ENCODE measurements at regions of chr6 and their contacts with region 1.

Region 1: GRCh38 chr6:6724539-6725467 is 136.3 kb downstream of the LY86 start:
- DNase-seq: peak; percentile 73
- ATAC-seq: peak; percentile 84
- H3K4me3 ChIP-seq: peak overlapping the region; percentile 37; the same call in 1 of the 2 replicates
- H3K27ac ChIP-seq: peak overlapping the region; percentile 57
- H3K4me1 ChIP-seq: peaks cover 19% of the 10 kb centered on the region
- H3K27me3 ChIP-seq: no peaks in the 10 kb centered on the region
- CTCF ChIP-seq: peak; percentile 88

Region 2: DNA sequence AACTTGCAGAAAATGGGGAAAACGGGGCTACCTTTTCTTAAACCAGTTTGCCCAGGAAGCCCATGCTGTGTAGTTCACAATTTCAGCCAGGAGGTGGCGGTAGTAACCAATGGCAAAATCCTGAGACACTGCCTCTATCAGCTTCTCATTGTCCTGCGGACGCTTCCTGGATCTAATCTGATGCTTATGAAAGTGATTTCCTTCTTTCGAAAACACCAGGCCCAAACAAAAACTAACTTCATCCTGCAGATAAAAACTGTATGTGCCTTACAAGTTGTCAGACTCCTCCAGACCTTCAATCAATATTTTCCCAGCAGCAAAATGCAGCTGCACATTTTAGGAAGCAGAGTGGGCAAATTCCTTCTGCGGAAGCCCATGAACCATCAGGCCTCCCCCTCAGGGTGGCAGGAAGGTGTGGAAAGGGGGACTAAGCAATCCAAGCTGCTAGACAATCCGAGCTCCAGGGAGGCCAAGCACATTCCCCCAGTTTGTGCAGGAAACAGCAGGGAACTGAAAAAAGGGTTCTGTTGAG is 47.8 kb before region 1 on chr6:
- CTCF ChIA-PET with region 1: no interaction called
- POLR2A ChIA-PET with region 1: no interaction called
- intact Hi-C with region 1: loop called (anchors 5 kb)
- DNase-seq: peak; percentile 93
- ATAC-seq: peak; percentile 74
- H3K4me3 ChIP-seq: no peak overlapping the region
- H3K27ac ChIP-seq: peak overlapping the region; percentile 36
- H3K4me1 ChIP-seq: peaks cover 17% of the 10 kb centered on the region
- H3K27me3 ChIP-seq: peaks cover 4% of the 10 kb centered on the region; the same call in 1 of the 2 replicates
- CTCF ChIP-seq: peak; percentile 96

Region 3: GRCh38 chr6:6856538-6857523 is 132.0 kb after region 1 on chr6:
- CTCF ChIA-PET with region 1: no interaction called
- POLR2A ChIA-PET with region 1: no interaction called
- intact Hi-C with region 1: loop called (anchors 10 kb)
- DNase-seq: peak; percentile 98
- ATAC-seq: peak; percentile 81
- H3K4me3 ChIP-seq: peak overlapping the region; percentile 36
- H3K27ac ChIP-seq: peak overlapping the region; percentile 96
- H3K4me1 ChIP-seq: peaks cover 29% of the 10 kb centered on the region
- H3K27me3 ChIP-seq: no peaks in the 10 kb centered on the region
- CTCF ChIP-seq: no peak

Region 4: DNA sequence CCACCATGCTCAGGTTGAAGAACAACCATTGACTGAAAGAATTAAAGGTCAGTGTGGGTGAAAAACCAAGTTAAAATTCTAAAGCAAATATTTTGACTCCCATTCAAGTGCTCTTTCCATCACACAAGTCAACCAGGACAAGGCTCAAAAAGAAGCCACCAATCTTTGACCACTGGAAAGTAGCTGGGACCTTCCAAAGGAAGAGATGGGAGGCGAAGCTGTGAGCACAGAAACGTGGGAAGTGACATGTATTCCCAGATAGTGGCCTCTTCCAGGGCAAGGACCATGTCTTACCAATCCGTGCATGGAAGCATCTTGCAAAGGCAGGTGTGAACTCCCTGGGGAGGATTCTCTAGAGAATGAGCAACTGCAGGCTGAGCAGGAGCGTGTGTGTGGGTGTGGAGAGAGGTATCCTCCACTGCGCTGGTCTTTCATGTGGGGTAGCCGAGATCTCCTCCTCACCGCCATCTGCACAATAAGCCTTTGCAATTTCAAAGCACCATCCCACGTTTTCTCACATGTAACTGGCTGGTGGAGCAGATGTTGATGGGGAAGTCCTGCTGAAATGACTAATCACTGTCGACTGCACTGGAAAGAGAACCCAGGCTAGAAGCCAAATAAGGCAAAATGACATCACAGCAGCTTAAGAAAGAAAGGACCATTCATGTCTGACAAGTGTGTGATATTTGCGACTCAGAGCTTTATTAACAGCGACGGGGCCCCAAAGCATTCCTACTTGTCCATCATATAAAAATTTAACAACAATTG is 193.6 kb after region 1 on chr6:
- CTCF ChIA-PET with region 1: no interaction called
- POLR2A ChIA-PET with region 1: no interaction called
- intact Hi-C with region 1: loop called (anchors 5 kb)
- DNase-seq: peak; percentile 75
- ATAC-seq: peak; percentile 45
- H3K4me3 ChIP-seq: no peak overlapping the region
- H3K27ac ChIP-seq: peak overlapping the region; percentile 73
- H3K4me1 ChIP-seq: peaks cover 42% of the 10 kb centered on the region
- H3K27me3 ChIP-seq: no peaks in the 10 kb centered on the region
- CTCF ChIP-seq: no peak

Region 5: GRCh38 chr6:7051233-7052114 is 326.7 kb after region 1 on chr6:
- CTCF ChIA-PET with region 1: no interaction called
- POLR2A ChIA-PET with region 1: no interaction called
- intact Hi-C with region 1: loop called (anchors 5 kb)
- DNase-seq: peak; percentile 60
- ATAC-seq: peak; percentile 45
- H3K4me3 ChIP-seq: peak overlapping the region; percentile 79
- H3K27ac ChIP-seq: peak overlapping the region; percentile 96
- H3K4me1 ChIP-seq: peaks cover 50% of the 10 kb centered on the region
- H3K27me3 ChIP-seq: no peaks in the 10 kb centered on the region
- CTCF ChIP-seq: no peak

Region 6: GRCh38 chr6:7112741-7113313 is 388.0 kb after region 1 on chr6:
- CTCF ChIA-PET with region 1: no interaction called
- POLR2A ChIA-PET with region 1: no interaction called
- intact Hi-C with region 1: loop called (anchors 5 kb)
- DNase-seq: peak; percentile 88
- ATAC-seq: peak; percentile 80
- H3K4me3 ChIP-seq: peak overlapping the region; percentile 97
- H3K27ac ChIP-seq: peak overlapping the region; percentile 90
- H3K4me1 ChIP-seq: peaks cover 38% of the 10 kb centered on the region
- H3K27me3 ChIP-seq: no peaks in the 10 kb centered on the region
- CTCF ChIP-seq: no peak

Region 7: GRCh38 chr6:7238900-7239589 is 514.2 kb after region 1 on chr6:
- CTCF ChIA-PET with region 1: no interaction called
- POLR2A ChIA-PET with region 1: no interaction called
- intact Hi-C with region 1: loop called (anchors 1 kb)
- DNase-seq: peak; percentile 83
- ATAC-seq: peak; percentile 34; the same call in 1 of the 2 replicates
- H3K4me3 ChIP-seq: no peak overlapping the region
- H3K27ac ChIP-seq: peak overlapping the region; percentile 18; the same call in 1 of the 2 replicates
- H3K4me1 ChIP-seq: peaks cover 55% of the 10 kb centered on the region
- H3K27me3 ChIP-seq: no peaks in the 10 kb centered on the region
- CTCF ChIP-seq: peak; percentile 87

Measured in PC-3 (cell line).